ENCODE measurements at regions of chr11 and their contacts with region 1.

Region 1: DNA sequence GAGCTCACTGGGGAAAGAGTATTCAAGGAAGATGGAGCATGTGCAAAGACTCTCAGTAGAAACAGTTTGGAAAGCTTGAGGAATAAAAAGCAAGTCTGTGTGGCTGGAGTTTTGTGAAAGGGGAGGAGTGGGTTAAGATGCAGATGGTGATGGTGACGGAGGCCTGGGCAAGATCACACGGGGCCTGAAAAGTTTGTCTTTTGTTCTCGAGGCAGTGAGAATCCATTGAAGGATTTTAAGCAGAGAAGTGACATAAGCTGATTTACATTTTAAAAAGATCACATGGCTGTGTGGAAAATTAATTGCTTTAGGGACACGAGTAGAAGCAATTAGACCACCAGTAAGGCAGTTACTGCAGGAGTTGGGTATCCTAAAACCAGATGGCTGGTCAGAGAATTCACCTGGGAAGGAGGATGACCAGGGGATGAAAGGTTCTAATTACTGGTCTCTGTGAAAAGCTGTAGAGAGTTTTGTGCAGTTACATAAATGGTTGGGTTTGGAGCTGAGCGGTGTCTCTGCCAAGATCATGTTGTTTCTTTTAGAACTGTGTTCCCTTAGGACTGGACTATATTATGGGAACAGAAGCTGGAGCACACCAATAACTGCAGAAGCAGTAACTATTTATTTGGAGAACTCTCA is 7.1 kb downstream of the RRP8 start:
- DNase-seq: no peak
- ATAC-seq: no peak
- H3K4me3 ChIP-seq: no peak overlapping the region
- H3K27ac ChIP-seq: peak overlapping the region in 1 of 2 donors; percentile 43
- H3K4me1 ChIP-seq: peaks cover 2 to 3% of the 10 kb centered on the region in 2 donors
- H3K27me3 ChIP-seq: no peaks in the 10 kb centered on the region

Region 2: DNA sequence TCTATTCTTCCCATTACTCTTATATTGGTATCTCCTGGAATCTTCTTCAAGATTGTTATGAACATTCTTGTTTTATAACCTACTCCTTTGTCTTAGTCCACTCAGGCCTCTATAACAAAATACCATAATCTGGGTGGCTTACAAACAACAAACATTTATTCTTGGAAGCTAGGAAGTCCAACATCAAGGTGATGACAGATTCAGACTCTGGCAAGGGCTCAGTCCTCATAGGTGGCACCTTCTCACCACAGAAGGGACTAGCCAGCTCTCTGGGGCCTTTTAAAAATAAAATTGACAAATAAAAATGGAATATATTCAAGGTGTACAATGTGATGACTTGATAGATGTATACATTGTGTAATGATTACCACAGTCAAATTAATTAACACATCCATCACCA is 79.5 kb before region 1 on chr11:
- intact Hi-C with region 1: loop called in 1 of 2 experiments (anchors 5 kb)
- DNase-seq: no peak
- ATAC-seq: no peak
- H3K4me3 ChIP-seq: no peak overlapping the region
- H3K27ac ChIP-seq: no peak overlapping the region
- H3K4me1 ChIP-seq: peaks cover 0 to 2% of the 10 kb centered on the region in 2 donors
- H3K27me3 ChIP-seq: no peaks in the 10 kb centered on the region

Region 3: GRCh38 chr11:6538456-6538855 is 57.9 kb before region 1 on chr11:
- intact Hi-C with region 1: loop called in 1 of 2 experiments (anchors 5 kb)
- DNase-seq: peak in 1 of 2 donors; percentile 64
- ATAC-seq: no peak
- H3K4me3 ChIP-seq: no peak overlapping the region
- H3K27ac ChIP-seq: no peak overlapping the region
- H3K4me1 ChIP-seq: no peaks in the 10 kb centered on the region
- H3K27me3 ChIP-seq: no peaks in the 10 kb centered on the region